ENCODE measurements at regions of chr2 and their contacts with region 1.

Region 1: DNA sequence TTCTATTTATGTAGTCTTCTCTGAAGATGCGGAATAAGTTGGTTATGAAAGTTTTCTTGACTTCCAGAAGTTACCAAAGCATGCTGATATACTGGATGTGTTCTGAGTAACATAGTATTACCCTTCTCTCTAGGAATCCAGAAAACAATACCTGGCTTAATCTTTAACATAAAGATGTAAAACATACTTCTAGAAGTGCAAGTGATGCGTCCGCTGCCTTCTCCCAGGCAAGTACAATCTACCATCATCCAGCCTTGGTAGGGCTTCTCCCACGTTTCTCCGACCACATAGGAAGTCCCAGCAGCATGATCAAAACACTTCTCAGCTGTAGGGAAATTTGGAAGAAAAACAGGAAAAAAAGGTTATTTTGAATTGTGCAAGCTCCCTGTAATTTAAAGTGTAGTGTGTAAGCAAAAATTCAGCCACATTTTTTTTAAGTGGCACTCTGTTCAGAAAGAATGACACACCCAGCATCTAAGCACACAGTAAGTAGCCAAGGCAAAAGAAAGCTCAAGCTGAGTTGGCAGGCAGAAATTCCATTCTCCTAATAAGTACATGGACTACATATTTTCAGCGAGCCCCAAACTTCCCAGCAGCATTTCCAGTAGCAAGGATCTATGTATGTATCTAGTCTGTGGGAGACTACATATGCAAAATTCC is 5.2 kb downstream of the FN1 start:
- DNase-seq: peak; percentile 71
- ATAC-seq: peak; percentile 33
- H3K4me3 ChIP-seq: no peak overlapping the region; the same call in 1 of the 2 replicates
- H3K27ac ChIP-seq: peak overlapping the region; percentile 73
- H3K4me1 ChIP-seq: peaks cover 8% of the 10 kb centered on the region
- H3K27me3 ChIP-seq: no peaks in the 10 kb centered on the region
- CTCF ChIP-seq: no peak
- POLR2A ChIP-seq: peak; percentile 41; the same call in 1 of the 2 replicates
- RAD21 ChIP-seq: no peak

Region 2: DNA sequence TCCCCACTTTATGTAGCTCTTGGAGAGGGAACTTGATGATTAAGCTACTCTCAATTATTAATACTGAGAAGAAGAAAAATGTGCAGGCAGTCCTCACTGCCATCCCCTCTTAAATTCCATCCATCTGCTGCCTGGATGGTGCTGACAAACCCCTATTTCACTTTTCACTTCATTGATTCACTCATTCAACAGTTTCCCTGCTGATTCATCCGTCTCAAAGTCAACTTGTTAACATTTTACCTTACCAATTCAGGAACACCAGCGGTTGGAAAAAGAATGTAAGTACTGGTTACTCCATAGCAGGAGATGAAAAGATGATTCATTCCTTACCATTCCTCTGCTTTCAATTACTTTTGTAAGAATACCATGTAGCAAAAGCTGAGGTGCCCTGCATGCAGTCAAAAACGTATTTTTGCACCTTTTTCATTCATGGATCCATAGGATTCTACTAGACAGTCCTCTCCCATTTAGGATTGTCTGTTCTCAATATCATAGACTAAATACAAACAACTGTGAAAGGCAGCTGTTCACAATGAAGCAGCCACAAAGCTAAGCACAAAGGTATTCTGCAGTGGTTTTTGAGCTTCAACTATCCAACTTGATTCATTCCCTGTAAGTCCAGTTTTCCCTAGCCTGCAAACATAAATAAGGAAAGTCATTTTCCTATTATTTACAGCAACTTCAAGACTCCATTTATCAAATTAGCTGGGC is 320.7 kb after region 1 on chr2:
- CTCF ChIA-PET with region 1: no interaction called
- POLR2A ChIA-PET with region 1: interaction called, 13 read pairs
- dilution Hi-C with region 1: no loop called
- in situ Hi-C with region 1: no loop called
- intact Hi-C with region 1: no loop called
- DNase-seq: peak; percentile 93
- ATAC-seq: peak; percentile 77
- H3K4me3 ChIP-seq: no peak overlapping the region
- H3K27ac ChIP-seq: peak overlapping the region; percentile 5; the same call in 1 of the 2 replicates
- H3K4me1 ChIP-seq: peaks cover 13% of the 10 kb centered on the region
- H3K27me3 ChIP-seq: no peaks in the 10 kb centered on the region
- CTCF ChIP-seq: no peak
- POLR2A ChIP-seq: no peak
- RAD21 ChIP-seq: peak; percentile 8; the same call in 1 of the 2 replicates

Region 3: GRCh38 chr2:215870986-215871385 is 440.3 kb after region 1 on chr2:
- CTCF ChIA-PET with region 1: interaction called, 10 read pairs
- POLR2A ChIA-PET with region 1: no interaction called
- dilution Hi-C with region 1: no loop called
- in situ Hi-C with region 1: no loop called
- intact Hi-C with region 1: no loop called
- DNase-seq: no peak
- ATAC-seq: no peak
- H3K4me3 ChIP-seq: no peak overlapping the region
- H3K27ac ChIP-seq: no peak overlapping the region
- H3K4me1 ChIP-seq: peaks cover 6% of the 10 kb centered on the region
- H3K27me3 ChIP-seq: no peaks in the 10 kb centered on the region
- CTCF ChIP-seq: 0 out of 2 replicates have a peak, but pooled peaks have one; percentile 14
- POLR2A ChIP-seq: no peak
- RAD21 ChIP-seq: no peak; the same call in 1 of the 2 replicates